Naive thymus-derived CD4-positive, alpha-beta T cell (primary cell): ENCODE measurements at regions of chr4 and their contacts with region 1.

Region 1: DNA sequence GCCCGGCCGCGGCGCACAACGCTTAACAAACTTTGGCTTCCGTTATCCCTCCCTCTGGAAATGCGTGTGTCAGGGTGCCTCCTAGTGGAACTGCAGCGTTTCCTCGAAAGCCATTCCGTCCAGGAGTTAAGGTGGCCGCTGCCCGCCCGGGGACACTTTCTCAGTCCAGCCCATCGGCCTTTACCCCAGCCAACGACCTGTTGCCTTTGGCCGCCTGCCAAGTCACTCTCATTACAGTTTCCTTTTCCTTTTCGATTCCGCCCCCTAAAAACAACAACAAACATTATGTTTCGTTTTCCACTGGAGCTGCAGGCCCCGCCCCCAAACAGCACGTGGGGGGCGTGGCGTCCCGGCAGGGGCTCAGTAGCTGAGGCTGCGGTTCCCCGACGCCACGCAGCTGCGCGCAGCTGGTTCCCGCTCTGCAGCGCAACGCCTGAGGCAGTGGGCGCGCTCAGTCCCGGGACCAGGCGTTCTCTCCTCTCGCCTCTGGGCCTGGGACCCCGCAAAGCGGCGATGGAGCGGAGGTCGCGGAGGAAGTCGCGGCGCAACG is at the start of gene HERC5:
- DNase-seq: peak; percentile 90 to 94 (median 92)
- ATAC-seq: peak; percentile 98
- H3K4me3 ChIP-seq: peak within 1 kb of the TSS; percentile 100
- H3K4me3 Mint-ChIP-seq: peak within 1 kb of the TSS; percentile 87 to 100 (median 98)
- H3K27ac ChIP-seq: peak within 1 kb of the TSS; percentile 72
- H3K27ac Mint-ChIP-seq: peak within 1 kb of the TSS; percentile 94 to 100 (median 99)
- H3K4me1 ChIP-seq: peaks cover 5 to 6% of the 10 kb centered on the region in 2 donors
- H3K4me1 Mint-ChIP-seq: peaks cover 10 to 52% (median 37%) of the 10 kb centered on the region in 7 donors
- H3K27me3 ChIP-seq: no peaks in the 10 kb centered on the region
- H3K27me3 Mint-ChIP-seq: no peaks in the 10 kb centered on the region
- total RNA-seq, gene HERC5: 11.8 to 52.5 (median 14.1) TPM

Region 2: DNA sequence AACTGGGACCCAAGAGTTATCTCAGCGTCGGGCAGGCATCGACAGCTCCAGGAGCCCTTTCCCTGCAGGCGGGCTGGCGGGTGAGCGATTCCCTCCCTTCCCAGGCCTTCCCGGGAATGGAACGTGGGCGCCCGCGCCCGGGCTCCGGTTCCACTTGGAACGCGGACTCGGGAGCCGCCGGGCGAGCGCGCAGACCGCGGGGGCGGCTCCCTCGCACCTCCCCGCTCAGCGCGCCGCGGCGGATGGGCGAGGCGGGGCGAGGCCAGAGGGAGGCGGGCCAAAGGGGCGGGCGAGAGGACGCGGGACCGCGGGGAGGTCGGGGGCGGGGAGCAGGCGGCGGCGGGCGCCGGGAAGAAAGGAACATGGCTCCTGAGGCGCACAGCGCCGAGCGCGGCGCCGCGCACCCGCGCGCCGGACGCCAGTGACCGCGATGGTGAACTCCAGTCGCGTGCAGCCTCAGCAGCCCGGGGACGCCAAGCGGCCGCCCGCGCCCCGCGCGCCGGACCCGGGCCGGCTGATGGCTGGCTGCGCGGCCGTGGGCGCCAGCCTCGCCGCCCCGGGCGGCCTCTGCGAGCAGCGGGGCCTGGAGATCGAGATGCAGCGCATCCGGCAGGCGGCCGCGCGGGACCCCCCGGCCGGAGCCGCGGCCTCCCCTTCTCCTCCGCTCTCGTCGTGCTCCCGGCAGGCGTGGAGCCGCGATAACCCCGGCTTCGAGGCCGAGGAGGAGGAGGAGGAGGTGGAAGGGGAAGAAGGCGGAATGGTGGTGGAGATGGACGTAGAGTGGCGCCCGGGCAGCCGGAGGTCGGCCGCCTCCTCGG is 449.3 kb before region 1 on chr4 and contains the start of gene PKD2:
- CTCF ChIA-PET with region 1: no interaction called
- POLR2A ChIA-PET with region 1: no interaction called
- intact Hi-C with region 1: loop called in 1 of 2 experiments (anchors 1 kb)
- DNase-seq: peak; percentile 10 to 89 (median 54)
- ATAC-seq: peak; percentile 92
- H3K4me3 ChIP-seq: peak within 1 kb of the TSS; percentile 61
- H3K4me3 Mint-ChIP-seq: peak within 1 kb of the TSS; percentile 81 to 98 (median 94)
- H3K27ac ChIP-seq: peak within 1 kb of the TSS; percentile 56
- H3K27ac Mint-ChIP-seq: peak within 1 kb of the TSS; percentile 2 to 90 (median 58)
- H3K4me1 ChIP-seq: peaks cover 6 to 7% of the 10 kb centered on the region in 2 donors
- H3K4me1 Mint-ChIP-seq: peaks cover 19 to 42% (median 37%) of the 10 kb centered on the region in 7 donors
- H3K27me3 ChIP-seq: no peaks in the 10 kb centered on the region
- H3K27me3 Mint-ChIP-seq: peaks cover 0 to 31% (median 3%) of the 10 kb centered on the region in 5 donors
- total RNA-seq, gene PKD2: 4.9 to 16.1 (median 6.8) TPM

Region 3: DNA sequence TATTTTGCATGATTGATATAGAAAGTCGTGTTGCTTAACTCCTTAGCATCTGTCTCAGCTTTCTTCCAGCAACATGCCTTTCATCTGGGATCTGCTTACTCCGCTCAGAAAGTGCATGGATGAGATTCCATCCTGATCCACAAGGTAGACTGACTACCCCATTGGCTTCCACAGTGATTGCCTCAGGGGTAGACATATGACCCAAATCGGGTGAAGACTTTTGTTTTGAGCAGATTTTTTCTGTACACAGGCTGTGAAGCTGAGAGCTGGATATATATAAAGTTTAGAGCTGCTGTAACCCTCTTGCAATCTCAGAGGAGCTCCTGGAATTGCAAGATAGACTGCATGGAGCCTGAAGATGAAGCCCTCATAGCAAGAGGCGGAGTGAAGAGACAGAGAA is 86.9 kb before region 1 on chr4:
- CTCF ChIA-PET with region 1: no interaction called
- POLR2A ChIA-PET with region 1: no interaction called
- intact Hi-C with region 1: loop called in 1 of 2 experiments (anchors 2 kb)
- DNase-seq: no peak
- ATAC-seq: no peak
- H3K4me3 ChIP-seq: no peak overlapping the region
- H3K4me3 Mint-ChIP-seq: no peak overlapping the region
- H3K27ac ChIP-seq: no peak overlapping the region
- H3K27ac Mint-ChIP-seq: no peak overlapping the region
- H3K4me1 ChIP-seq: no peaks in the 10 kb centered on the region
- H3K4me1 Mint-ChIP-seq: peaks cover 0 to 22% (median 0%) of the 10 kb centered on the region in 7 donors
- H3K27me3 ChIP-seq: no peaks in the 10 kb centered on the region
- H3K27me3 Mint-ChIP-seq: peaks cover 0 to 3% (median 0%) of the 10 kb centered on the region in 5 donors

Region 4: GRCh38 chr4:88514557-88515511 is 58.0 kb after region 1 on chr4:
- CTCF ChIA-PET with region 1: interaction called, 3 read pairs
- POLR2A ChIA-PET with region 1: interaction called, 3 read pairs
- intact Hi-C with region 1: loop called in 1 of 2 experiments (anchors 2 kb)
- DNase-seq: no peak
- ATAC-seq: no peak
- H3K4me3 ChIP-seq: no peak overlapping the region
- H3K4me3 Mint-ChIP-seq: no peak overlapping the region
- H3K27ac ChIP-seq: no peak overlapping the region
- H3K27ac Mint-ChIP-seq: no peak overlapping the region
- H3K4me1 ChIP-seq: no peaks in the 10 kb centered on the region
- H3K4me1 Mint-ChIP-seq: no peaks in the 10 kb centered on the region
- H3K27me3 ChIP-seq: no peaks in the 10 kb centered on the region
- H3K27me3 Mint-ChIP-seq: peaks cover 0 to 8% (median 0%) of the 10 kb centered on the region in 5 donors